ENCODE measurements at regions of chr22 and their contacts with region 1.

Region 1: DNA sequence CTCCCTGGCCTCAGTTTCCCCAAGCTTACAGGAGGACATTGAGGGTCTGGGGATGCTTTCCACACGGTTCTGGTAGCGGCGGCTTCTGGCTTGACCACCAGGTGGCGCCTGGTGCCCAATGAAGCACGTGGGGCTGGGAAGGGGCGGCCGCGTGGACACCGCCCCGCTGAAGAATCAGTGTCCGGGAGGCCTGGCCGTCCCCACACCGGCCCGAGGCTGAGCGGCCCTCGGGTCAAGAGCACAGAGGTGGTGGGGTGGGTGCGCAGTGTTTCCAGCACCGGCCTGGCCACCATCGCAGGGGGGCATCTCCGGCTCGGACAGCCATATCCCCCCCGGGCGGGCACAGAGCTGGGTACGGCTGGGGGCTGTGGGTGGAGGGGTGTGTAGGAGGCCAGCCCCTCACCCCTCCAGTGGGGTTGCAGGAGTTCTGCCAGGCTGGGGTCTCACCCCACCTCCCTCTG is 27.8 kb upstream of the PPARA start:
- DNase-seq: peak; percentile 92
- H3K4me3 Mint-ChIP-seq: no peak overlapping the region
- H3K27ac Mint-ChIP-seq: no peak overlapping the region
- H3K4me1 Mint-ChIP-seq: peaks cover 5% of the 10 kb centered on the region
- H3K27me3 Mint-ChIP-seq: no peaks in the 10 kb centered on the region

Region 2: DNA sequence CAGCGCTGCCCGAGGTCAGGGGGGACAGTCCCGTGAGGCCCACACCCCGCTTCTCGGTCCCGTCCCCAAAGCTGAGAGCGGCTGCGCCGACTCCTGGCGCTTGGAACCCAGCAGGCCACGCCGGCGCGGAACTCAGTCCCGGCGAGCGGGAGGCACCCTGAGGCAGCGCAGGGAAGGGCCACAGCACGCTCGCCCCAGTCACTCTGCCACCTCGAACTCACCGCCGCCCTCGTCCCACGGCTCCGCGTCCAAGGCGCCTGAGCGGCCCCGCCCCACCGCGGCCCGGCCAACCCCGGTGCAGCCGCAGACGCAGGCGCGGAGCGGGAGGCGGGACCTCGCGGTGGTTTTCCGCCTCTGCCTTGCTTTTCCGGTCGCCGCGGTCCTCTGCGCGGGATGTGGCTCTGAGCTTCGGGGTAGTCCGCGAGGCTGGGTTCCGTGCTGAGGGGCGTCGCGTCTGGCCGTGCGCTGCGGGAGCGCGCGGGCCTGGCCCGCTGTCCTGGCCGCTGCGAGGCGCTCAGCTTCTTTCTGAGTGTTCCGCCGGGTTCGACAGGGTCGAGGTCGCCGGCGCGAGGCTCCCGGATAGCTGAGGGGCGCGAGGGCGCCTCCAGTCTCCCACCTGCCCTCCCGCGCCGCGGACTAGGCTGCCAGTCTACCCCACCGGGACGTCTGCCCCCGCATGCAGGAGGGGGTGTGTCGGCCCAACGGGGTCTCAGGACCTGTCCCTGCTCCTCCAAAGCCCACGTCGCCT is 127.7 kb after region 1 on chr22 and contains the start of gene CDPF1:
- intact Hi-C with region 1: loop called (anchors 1 kb)
- DNase-seq: peak; percentile 98
- H3K4me3 Mint-ChIP-seq: peak within 1 kb of the TSS; percentile 91
- H3K27ac Mint-ChIP-seq: peak within 1 kb of the TSS; percentile 89
- H3K4me1 Mint-ChIP-seq: peaks cover 27% of the 10 kb centered on the region
- H3K27me3 Mint-ChIP-seq: no peaks in the 10 kb centered on the region
- total RNA-seq, gene CDPF1: 10.4 and 10.6 TPM in 2 replicates

Region 3: DNA sequence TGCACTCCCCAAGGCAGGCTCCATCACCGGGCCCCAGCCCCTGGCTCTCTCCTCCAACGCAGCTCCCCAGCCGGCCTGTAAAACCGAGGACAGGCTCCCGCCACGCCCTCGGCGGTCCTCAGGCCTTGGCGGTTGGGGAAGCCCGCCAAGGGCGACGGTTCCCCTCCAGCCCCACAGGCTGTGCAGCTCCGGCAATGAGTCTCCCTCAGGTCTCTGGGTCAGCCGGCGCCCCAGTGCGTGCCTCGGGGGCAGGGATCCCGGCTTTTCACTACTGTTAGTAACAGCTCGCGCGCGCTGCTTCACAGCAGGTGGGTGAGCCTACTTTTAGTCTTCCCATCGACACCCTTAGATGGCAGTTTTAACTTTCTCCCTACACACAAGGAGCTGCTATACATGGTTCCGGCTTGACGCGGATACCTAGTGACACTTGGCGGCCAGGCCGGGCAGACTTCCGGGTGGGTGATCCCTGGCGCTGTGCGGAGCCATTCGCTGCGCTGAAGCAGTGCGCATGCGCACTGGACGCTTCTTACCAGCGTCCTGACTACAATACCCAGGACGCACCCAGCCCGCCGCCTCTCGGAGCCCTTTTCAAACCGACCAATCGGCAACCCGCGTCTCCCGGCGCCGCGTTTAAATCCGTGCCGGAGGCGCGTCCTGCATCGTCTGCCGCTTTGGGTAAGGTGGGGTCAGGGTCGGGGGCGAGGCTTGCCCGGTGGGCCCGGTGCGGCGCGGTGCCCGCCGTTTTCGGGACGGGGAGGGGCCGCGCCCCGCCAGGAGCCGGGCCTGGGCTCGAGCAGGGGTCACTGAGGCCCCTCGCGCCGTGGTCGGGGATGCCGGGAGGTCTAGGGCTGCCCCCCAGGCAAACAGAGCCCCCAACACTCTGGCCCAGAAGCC is 174.0 kb after region 1 on chr22 and contains the start of gene GTSE1:
- intact Hi-C with region 1: loop called (anchors 5 kb)
- DNase-seq: peak; percentile 99
- H3K4me3 Mint-ChIP-seq: peak within 1 kb of the TSS; percentile 91
- H3K27ac Mint-ChIP-seq: peak within 1 kb of the TSS; percentile 94
- H3K4me1 Mint-ChIP-seq: peaks cover 44% of the 10 kb centered on the region
- H3K27me3 Mint-ChIP-seq: no peaks in the 10 kb centered on the region
- total RNA-seq, gene GTSE1: 37.6 and 40.8 TPM in 2 replicates

Region 4: DNA sequence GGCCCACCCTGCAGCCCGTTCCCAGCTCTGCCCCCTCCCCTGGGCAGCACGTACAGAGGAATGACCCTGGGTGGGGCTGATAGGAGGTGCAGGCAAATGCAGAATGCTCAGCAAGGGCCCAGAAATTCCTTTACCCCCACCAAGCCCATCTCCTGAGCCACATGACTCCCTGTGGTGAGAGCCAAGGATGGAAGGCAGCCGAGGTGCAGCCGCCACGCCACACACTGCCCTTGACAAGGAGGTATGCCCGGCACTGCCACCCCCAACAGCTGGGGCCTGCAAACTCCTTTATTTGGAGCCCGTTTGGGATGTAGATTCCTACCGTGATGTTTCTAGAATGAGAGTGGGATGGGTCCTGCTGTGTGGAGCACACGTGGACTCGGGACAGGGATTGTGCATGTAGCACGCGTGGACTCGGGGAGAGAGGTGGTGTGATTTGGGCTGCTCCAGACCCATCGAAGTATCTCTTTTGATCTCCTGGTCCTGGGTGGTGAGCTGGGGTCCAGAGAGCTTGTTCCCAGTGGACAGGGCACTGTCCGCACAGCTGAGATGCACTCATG is 187.1 kb after region 1 on chr22:
- intact Hi-C with region 1: loop called (anchors 1 kb)
- DNase-seq: no peak
- H3K4me3 Mint-ChIP-seq: no peak overlapping the region
- H3K27ac Mint-ChIP-seq: no peak overlapping the region
- H3K4me1 Mint-ChIP-seq: peaks cover 12% of the 10 kb centered on the region
- H3K27me3 Mint-ChIP-seq: no peaks in the 10 kb centered on the region

Region 5: GRCh38 chr22:46542011-46542985 is 419.8 kb after region 1 on chr22:
- intact Hi-C with region 1: loop called (anchors 1 kb)
- DNase-seq: peak; percentile 91
- H3K4me3 Mint-ChIP-seq: no peak overlapping the region
- H3K27ac Mint-ChIP-seq: no peak overlapping the region
- H3K4me1 Mint-ChIP-seq: peaks cover 8% of the 10 kb centered on the region
- H3K27me3 Mint-ChIP-seq: peaks cover 35% of the 10 kb centered on the region

Measured in activated CD4-positive, alpha-beta T cell treated with anti-CD3 and anti-CD28 coated beads, Interleukin-2, amount 10 ng/mL, durations not matched to agents 24 days and 14 days (primary cell).